ENCODE measurements at regions of chr15 and their contacts with region 1.

Region 1: GRCh38 chr15:25933456-25934158 is 70.5 kb upstream of the ATP10A start:
- DNase-seq: no peak
- H3K4me3 ChIP-seq: peak overlapping the region in 1 of 2 donors; percentile 33
- H3K27ac ChIP-seq: no peak overlapping the region
- H3K4me1 ChIP-seq: no peaks in the 10 kb centered on the region
- H3K27me3 ChIP-seq: no peaks in the 10 kb centered on the region
- CTCF ChIP-seq: peak in 2 of 3 experiments; percentile 37 to 47
- POLR2A ChIP-seq: no peak

Region 2: DNA sequence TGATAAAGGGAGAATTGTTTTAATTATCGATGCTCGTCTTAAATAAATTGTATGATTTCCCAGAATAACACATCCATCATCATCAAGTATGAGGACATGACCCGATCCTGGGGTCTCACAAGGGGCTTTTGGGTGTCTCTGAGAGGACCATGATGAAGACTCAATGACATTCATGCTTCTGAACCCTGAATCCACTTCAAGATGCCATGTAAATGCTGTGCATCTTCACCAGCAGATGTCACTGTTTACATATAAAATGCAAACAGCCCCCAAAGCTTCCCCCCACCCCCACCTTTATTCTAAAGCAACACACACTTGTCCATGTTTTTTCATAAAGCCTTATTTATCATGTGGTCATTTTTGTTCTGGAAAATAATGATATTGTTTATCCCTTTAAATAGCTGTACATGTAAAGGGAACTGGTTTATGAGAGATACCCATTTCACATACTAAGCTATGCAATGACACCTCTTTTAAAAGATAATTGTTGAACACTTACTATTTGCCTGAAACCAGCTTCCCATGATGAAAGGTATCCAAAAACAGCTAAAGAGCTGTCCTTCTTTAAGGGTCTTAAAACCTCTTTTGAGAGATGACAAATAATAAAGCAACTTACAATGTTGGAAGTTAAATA is 425.1 kb before region 1 on chr15:
- intact Hi-C with region 1: loop called (anchors 10 kb)
- DNase-seq: no peak
- H3K4me3 ChIP-seq: no peak overlapping the region
- H3K27ac ChIP-seq: no peak overlapping the region
- H3K4me1 ChIP-seq: no peaks in the 10 kb centered on the region
- H3K27me3 ChIP-seq: no peaks in the 10 kb centered on the region
- CTCF ChIP-seq: peak; percentile 28 to 68 (median 59)
- POLR2A ChIP-seq: no peak

Measured in vagina (tissue), 2 donors.